Esophagus muscularis mucosa (tissue), 4 donors: ENCODE measurements at regions of chr7 and their contacts with region 1.

Region 1: GRCh38 chr7:143287935-143288826 is at the start of gene CASP2:
- DNase-seq: peak; percentile 99
- H3K4me3 ChIP-seq: peak within 1 kb of the TSS; percentile 81 to 97 (median 90)
- H3K27ac ChIP-seq: peak within 1 kb of the TSS; percentile 87 to 95 (median 90)
- H3K4me1 ChIP-seq: peaks cover 27 to 42% (median 34%) of the 10 kb centered on the region in 4 donors
- H3K27me3 ChIP-seq: no peaks in the 10 kb centered on the region
- CTCF ChIP-seq: peak; percentile 29 to 52 (median 30)
- EP300 ChIP-seq: no peak
- POLR2A ChIP-seq: peak; percentile 19
- total RNA-seq, gene CASP2: 7.1 to 11.7 (median 9.0) TPM

Region 2: DNA sequence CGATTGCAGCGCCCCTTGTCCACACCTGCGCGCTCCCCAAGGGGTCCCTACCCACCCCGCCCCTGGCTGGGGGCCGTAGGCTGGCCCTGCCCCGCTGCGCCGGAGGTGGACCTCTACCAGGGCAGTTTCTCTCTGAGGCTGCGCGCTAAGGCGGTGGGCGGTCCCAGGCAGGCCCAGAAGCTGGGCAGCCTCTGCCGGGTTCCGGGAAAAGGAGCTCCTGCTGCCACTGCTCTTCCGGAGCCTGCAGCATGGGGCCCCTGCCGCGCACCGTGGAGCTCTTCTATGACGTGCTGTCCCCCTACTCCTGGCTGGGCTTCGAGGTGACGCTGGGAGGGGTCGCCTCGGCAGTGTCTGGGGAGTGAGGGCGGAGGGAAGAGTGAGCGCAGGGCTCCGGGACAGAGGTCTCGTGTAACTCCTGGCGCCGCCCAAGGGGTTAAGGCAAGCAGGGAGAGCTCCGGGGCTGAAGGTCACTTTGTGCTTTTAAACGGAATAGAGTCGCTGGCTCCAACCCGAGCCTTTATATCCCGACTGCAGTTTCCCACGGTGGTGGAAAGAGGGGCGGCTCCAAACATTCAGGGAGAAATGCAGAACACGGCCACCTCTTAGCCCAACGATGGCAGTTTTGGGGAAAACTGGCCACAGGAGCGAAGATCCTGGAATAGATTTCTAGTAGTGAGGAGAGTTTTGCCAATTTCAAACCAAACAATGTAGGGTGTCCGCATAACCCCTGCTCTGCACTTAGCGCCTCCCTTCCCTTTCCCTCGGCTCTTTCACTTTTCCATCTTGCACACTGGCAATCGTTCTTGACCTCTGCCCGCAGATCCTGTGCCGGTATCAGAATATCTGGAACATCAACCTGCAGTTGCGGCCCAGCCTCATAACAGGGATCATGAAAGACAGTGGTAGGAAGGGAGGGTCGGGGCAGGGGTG is 24.6 kb before region 1 on chr7 and contains the start of gene GSTK1:
- intact Hi-C with region 1: loop called (anchors 2 kb)
- DNase-seq: peak; percentile 94
- H3K4me3 ChIP-seq: peak within 1 kb of the TSS; percentile 68 to 95 (median 78)
- H3K27ac ChIP-seq: peak within 1 kb of the TSS; percentile 82 to 86 (median 84)
- H3K4me1 ChIP-seq: peaks cover 19 to 38% (median 25%) of the 10 kb centered on the region in 4 donors
- H3K27me3 ChIP-seq: no peaks in the 10 kb centered on the region
- CTCF ChIP-seq: no peak
- EP300 ChIP-seq: no peak
- POLR2A ChIP-seq: peak; percentile 50
- total RNA-seq, gene GSTK1: 91.8 to 123 (median 110) TPM

Region 3: DNA sequence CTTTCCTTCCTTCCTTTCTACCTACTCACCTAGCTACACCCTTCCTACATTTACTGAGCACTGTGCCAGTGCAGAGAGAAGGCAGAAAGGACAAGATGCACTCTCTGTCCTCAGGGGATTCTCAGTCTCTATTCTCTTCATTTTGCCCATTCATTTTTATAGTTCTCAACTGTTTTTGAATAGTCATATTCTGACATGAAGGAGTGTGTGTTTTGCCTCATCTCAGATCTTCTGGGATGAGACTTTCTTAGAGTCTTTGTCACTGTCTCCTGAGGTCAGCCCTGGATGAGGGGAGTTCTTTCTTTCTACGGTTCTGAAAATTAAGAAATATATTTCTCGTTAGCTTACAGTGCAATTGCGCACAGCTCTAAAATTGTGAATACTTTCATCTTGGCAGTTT is 49.0 kb after region 1 on chr7:
- intact Hi-C with region 1: no loop called
- DNase-seq: no peak
- H3K4me3 ChIP-seq: no peak overlapping the region
- H3K27ac ChIP-seq: no peak overlapping the region
- H3K4me1 ChIP-seq: no peaks in the 10 kb centered on the region
- H3K27me3 ChIP-seq: peaks cover 0 to 9% (median 0%) of the 10 kb centered on the region in 4 donors
- CTCF ChIP-seq: no peak
- EP300 ChIP-seq: no peak
- POLR2A ChIP-seq: no peak